Lower lobe of right lung (tissue), 2 donors: ENCODE measurements at regions of chr16 and their contacts with region 1.

Region 1: GRCh38 chr16:4360538-4361021 is 9.5 kb upstream of the PAM16 start:
- DNase-seq: no peak
- ATAC-seq: peak; percentile 13 to 40
- H3K4me3 ChIP-seq: no peak overlapping the region
- H3K27ac ChIP-seq: no peak overlapping the region
- H3K4me1 ChIP-seq: peaks cover 6% of the 10 kb centered on the region
- H3K27me3 ChIP-seq: no peaks in the 10 kb centered on the region
- CTCF ChIP-seq: no peak

Region 2: GRCh38 chr16:4402439-4403132 is 42.0 kb after region 1 on chr16:
- intact Hi-C with region 1: loop called (anchors 5 kb)
- DNase-seq: peak; percentile 89
- ATAC-seq: peak; percentile 94
- H3K4me3 ChIP-seq: no peak overlapping the region
- H3K27ac ChIP-seq: no peak overlapping the region
- H3K4me1 ChIP-seq: peaks cover 13% of the 10 kb centered on the region
- H3K27me3 ChIP-seq: no peaks in the 10 kb centered on the region
- CTCF ChIP-seq: peak; percentile 93